Adrenal gland (tissue), 19 donors: ENCODE measurements at regions of chr10 and their contacts with region 1.

Region 1: GRCh38 chr10:88791924-88792323 is 10.6 kb upstream of the LIPM start:
- DNase-seq: peak in 6 of 7 donors; percentile 31 to 57 (median 49)
- H3K4me3 ChIP-seq: no peak overlapping the region
- H3K27ac ChIP-seq: no peak overlapping the region
- H3K4me1 ChIP-seq: no peaks in the 10 kb centered on the region
- H3K27me3 ChIP-seq: no peaks in the 10 kb centered on the region
- CTCF ChIP-seq: peak; percentile 33 to 63 (median 55)
- POLR2A ChIP-seq: no peak

Region 2: DNA sequence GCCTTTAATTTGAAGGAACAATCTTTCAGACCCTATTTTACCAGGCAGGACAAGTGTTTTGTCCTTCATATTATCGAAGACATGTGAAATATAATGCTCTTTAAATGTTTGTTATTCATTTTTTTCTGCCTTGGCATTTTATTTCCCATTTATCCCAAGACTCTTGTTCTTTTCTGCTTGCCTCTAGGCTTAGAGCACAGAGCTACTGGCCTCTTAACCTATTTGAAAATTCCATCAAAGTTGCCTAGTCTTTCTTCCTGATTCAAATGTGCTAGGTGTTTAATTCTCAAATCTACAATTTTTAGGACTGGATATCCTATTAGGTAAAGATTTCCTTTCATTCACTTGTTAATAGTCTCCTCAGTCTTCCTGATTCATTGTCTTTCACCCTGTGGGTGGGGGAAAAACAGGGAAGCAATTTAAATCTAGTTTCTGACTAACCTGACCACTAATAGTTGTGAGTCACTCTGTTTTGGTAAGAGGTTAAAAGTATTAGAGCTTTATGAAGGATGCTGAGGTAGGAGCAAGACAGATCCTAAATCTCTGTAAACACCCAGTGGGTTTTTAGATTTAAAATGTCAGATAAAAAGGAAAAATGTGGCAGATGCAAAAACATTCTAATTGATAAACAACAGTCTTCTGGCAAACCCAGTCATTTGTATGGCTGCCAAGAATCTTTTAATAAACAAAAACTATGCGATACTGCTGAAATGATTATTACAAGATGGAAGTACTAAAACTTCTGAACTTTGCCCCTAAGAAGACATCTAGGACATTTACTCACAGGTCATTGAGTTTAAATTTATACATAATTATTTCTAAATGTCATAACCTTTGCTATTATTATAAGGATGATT is 84.3 kb before region 1 on chr10:
- intact Hi-C with region 1: loop called in 1 of 2 experiments (anchors 10 kb)
- DNase-seq: no peak
- H3K4me3 ChIP-seq: no peak overlapping the region
- H3K27ac ChIP-seq: no peak overlapping the region
- H3K4me1 ChIP-seq: no peaks in the 10 kb centered on the region
- H3K27me3 ChIP-seq: no peaks in the 10 kb centered on the region
- CTCF ChIP-seq: no peak
- POLR2A ChIP-seq: no peak